ENCODE measurements at regions of chr1 and their contacts with region 1.

Region 1: GRCh38 chr1:12658531-12659453 is 14.9 kb downstream of the AADACL4 start:
- DNase-seq: peak; percentile 77
- ATAC-seq: peak; percentile 77
- H3K4me3 Mint-ChIP-seq: peak overlapping the region; percentile 11
- H3K27ac Mint-ChIP-seq: no peak overlapping the region
- H3K4me1 Mint-ChIP-seq: peaks cover 6% of the 10 kb centered on the region
- H3K27me3 Mint-ChIP-seq: peaks cover 8% of the 10 kb centered on the region

Region 2: GRCh38 chr1:12275369-12275768 is 383.4 kb before region 1 on chr1:
- CTCF ChIA-PET with region 1: interaction called, 28 read pairs
- DNase-seq: peak; percentile 59
- ATAC-seq: no peak
- H3K4me3 Mint-ChIP-seq: no peak overlapping the region
- H3K27ac Mint-ChIP-seq: no peak overlapping the region
- H3K4me1 Mint-ChIP-seq: no peaks in the 10 kb centered on the region
- H3K27me3 Mint-ChIP-seq: no peaks in the 10 kb centered on the region

Region 3: GRCh38 chr1:12296623-12297022 is 362.2 kb before region 1 on chr1:
- CTCF ChIA-PET with region 1: interaction called, 10 read pairs
- DNase-seq: no peak
- ATAC-seq: peak; percentile 91
- H3K4me3 Mint-ChIP-seq: peak overlapping the region; percentile 27
- H3K27ac Mint-ChIP-seq: peak overlapping the region; percentile 79
- H3K4me1 Mint-ChIP-seq: peaks cover 29% of the 10 kb centered on the region
- H3K27me3 Mint-ChIP-seq: no peaks in the 10 kb centered on the region

Region 4: GRCh38 chr1:12314333-12314903 is 344.4 kb before region 1 on chr1:
- CTCF ChIA-PET with region 1: interaction called, 60 read pairs
- DNase-seq: no peak
- ATAC-seq: peak; percentile 49
- H3K4me3 Mint-ChIP-seq: no peak overlapping the region
- H3K27ac Mint-ChIP-seq: no peak overlapping the region
- H3K4me1 Mint-ChIP-seq: no peaks in the 10 kb centered on the region
- H3K27me3 Mint-ChIP-seq: no peaks in the 10 kb centered on the region

Region 5: DNA sequence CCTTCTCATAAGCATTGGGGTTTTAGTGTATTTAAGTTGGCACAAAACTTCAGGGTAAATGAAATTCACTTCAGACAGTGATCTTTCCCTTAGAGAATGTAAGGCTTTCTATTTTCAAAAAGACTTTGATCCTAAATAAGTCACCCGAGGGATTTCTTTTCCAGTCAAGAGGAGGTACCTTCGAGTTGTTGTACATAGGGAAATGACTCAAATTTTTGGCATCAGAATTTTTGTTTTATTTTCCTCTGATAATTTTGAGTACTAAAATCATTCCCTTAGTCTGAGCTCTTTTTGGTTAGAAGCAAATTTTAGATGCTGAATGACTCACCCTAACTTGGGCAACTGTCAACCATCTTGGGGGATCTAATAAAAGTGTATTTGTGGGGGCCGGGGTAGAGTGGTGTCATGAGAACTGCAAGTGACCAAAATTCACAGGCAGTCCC is 234.7 kb before region 1 on chr1:
- CTCF ChIA-PET with region 1: no interaction called
- DNase-seq: no peak
- ATAC-seq: no peak
- H3K4me3 Mint-ChIP-seq: no peak overlapping the region
- H3K27ac Mint-ChIP-seq: no peak overlapping the region
- H3K4me1 Mint-ChIP-seq: peaks cover 6% of the 10 kb centered on the region
- H3K27me3 Mint-ChIP-seq: no peaks in the 10 kb centered on the region

Region 6: GRCh38 chr1:12604114-12604874 is 54.5 kb before region 1 on chr1:
- CTCF ChIA-PET with region 1: interaction called, 11 read pairs
- DNase-seq: peak; percentile 90
- ATAC-seq: peak; percentile 98
- H3K4me3 Mint-ChIP-seq: peak overlapping the region; percentile 28
- H3K27ac Mint-ChIP-seq: peak overlapping the region; percentile 52
- H3K4me1 Mint-ChIP-seq: peaks cover 29% of the 10 kb centered on the region
- H3K27me3 Mint-ChIP-seq: no peaks in the 10 kb centered on the region

Region 7: DNA sequence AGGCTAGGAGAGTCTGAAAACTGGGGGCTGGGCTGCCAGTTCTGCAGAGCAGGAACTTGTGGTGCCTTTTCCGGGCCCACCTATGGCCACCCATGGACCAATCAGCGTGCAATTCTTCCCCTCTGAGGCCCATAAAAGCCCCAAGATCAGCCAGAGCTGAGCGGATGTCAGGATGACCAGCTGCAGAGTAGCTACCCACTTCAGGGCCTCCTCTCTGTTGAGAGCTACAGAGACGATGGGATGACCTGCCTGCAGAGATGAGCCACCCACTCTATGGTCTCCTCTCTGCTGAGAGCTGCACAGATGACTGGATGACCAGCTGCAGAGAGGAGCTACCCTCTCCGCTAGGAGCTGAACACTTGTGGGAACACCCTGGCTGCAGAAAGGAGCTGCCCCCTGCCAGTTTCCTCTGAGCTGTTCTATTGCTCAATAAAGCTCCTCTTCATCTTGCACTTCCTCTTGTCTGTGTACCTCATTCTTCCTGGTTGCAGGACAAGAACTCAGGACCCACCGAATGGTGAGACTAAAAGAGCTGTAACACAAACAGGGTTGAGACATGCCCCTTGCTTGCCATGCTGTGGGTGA is 27.8 kb before region 1 on chr1:
- CTCF ChIA-PET with region 1: interaction called, 10 read pairs
- DNase-seq: no peak
- ATAC-seq: no peak
- H3K4me3 Mint-ChIP-seq: no peak overlapping the region
- H3K27ac Mint-ChIP-seq: no peak overlapping the region
- H3K4me1 Mint-ChIP-seq: peaks cover 3% of the 10 kb centered on the region
- H3K27me3 Mint-ChIP-seq: peaks cover 21% of the 10 kb centered on the region

Region 8: DNA sequence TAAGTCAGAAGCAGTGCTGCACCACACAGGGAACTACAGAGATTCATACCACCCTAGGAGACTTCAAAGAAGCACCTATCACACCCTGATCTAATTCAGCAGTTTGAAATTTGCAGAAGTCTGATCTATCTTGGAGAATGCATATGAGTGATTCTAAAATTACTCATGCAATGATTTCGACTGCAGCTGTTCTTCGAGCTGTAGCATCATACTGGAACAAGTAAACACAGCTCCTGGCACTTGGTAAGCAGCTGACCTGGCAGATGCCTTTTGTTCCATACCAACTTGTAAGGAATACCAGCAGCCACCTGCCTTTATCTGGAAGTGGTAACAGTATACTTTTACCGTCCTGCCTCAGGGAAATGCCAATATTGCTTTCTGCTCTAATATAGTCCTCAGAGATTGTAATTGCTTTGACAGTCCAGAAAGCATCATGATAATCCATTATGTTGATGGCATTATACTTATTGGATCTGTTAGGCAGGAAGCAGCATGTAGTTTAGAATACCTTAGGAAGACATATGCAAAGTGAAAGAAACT is 10.8 kb after region 1 on chr1:
- CTCF ChIA-PET with region 1: interaction called, 11 read pairs
- DNase-seq: no peak
- ATAC-seq: no peak
- H3K4me3 Mint-ChIP-seq: no peak overlapping the region
- H3K27ac Mint-ChIP-seq: no peak overlapping the region
- H3K4me1 Mint-ChIP-seq: no peaks in the 10 kb centered on the region
- H3K27me3 Mint-ChIP-seq: peaks cover 31% of the 10 kb centered on the region

Measured in activated CD8-positive, alpha-beta memory T cell treated with anti-CD3 and anti-CD28 coated beads, Interleukin-2, amount 10 ng/mL, durations not matched to agents 7 days and 5 days (primary cell).